ENCODE measurements at regions of chr5 and their contacts with region 1.

Region 1: GRCh38 chr5:77972469-77973252 is 196.5 kb upstream of the TBCA start:
- DNase-seq: no peak
- H3K4me3 ChIP-seq: peak overlapping the region in 2 of 3 experiments; percentile 12 to 14
- H3K27ac ChIP-seq: no peak overlapping the region
- H3K4me1 ChIP-seq: peaks cover 5% of the 10 kb centered on the region
- H3K27me3 ChIP-seq: peaks cover 6% of the 10 kb centered on the region
- CTCF ChIP-seq: peak; percentile 2 to 41

Region 2: GRCh38 chr5:77761606-77762005 is 211.1 kb before region 1 on chr5:
- CTCF ChIA-PET with region 1: no interaction called
- dilution Hi-C with region 1: no loop called
- in situ Hi-C with region 1: no loop called
- intact Hi-C with region 1: no loop called
- DNase-seq: no peak
- H3K4me3 ChIP-seq: no peak overlapping the region
- H3K27ac ChIP-seq: no peak overlapping the region
- H3K4me1 ChIP-seq: peaks cover 10% of the 10 kb centered on the region
- H3K27me3 ChIP-seq: no peaks in the 10 kb centered on the region
- CTCF ChIP-seq: no peak

Region 3: DNA sequence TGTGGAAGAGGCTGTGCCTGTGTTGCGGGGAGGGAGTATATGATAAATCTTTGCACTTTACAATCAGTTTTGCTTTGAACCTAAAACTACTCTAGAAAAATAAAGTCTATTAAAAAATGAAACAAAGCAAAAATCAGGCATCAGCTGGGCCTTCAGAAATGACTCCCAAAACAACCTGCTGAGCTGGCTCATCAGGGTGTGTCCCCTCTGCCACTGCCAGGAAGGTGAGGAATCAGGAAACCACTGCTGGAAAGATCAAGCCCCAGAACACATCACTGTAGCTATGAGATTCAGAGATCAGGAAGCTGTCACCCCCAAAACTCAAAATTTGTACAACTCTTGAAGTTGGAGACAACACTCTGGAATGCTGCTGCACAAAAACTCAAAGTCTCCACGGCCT is 156.0 kb before region 1 on chr5:
- CTCF ChIA-PET with region 1: no interaction called
- dilution Hi-C with region 1: loop called (anchors 5 kb)
- in situ Hi-C with region 1: no loop called
- intact Hi-C with region 1: no loop called
- DNase-seq: peak; percentile 6
- H3K4me3 ChIP-seq: no peak overlapping the region
- H3K27ac ChIP-seq: no peak overlapping the region
- H3K4me1 ChIP-seq: no peaks in the 10 kb centered on the region
- H3K27me3 ChIP-seq: peaks cover 5% of the 10 kb centered on the region
- CTCF ChIP-seq: no peak

Region 4: GRCh38 chr5:77935506-77936364 is 36.9 kb before region 1 on chr5:
- CTCF ChIA-PET with region 1: no interaction called
- dilution Hi-C with region 1: no loop called
- in situ Hi-C with region 1: no loop called
- intact Hi-C with region 1: no loop called
- DNase-seq: no peak
- H3K4me3 ChIP-seq: no peak overlapping the region
- H3K27ac ChIP-seq: no peak overlapping the region
- H3K4me1 ChIP-seq: no peaks in the 10 kb centered on the region
- H3K27me3 ChIP-seq: peaks cover 6% of the 10 kb centered on the region
- CTCF ChIP-seq: no peak